ENCODE measurements at regions of chr7 and their contacts with region 1.

Region 1: DNA sequence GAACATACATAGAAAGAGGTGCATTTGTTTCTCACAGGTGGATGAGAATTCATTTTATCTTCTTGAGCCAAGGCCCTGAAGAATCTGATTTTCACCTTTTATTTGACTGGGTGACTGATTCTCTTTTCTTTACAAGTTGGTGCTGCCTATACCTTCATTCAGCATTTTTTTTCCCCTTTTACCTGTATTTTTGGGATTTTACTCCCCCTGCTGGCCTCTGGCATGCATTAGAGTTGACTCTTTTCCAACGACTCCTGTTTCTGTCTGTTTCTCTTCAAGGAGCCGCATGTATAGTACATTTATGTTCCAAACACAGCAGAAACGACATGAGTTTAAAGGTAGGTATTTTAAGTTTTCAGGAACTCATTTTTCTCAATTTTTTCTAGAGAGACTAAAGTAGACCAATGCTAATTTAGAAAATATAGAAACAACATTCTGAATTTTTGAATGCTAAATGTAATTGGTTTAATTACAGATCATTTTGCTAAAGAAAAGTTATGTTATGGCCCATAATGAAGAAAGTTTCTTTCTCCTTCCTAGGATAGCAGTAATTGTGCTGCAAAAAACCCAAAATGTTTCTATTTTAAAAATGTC is 149.8 kb upstream of the HDAC9 start:
- DNase-seq: no peak
- ATAC-seq: peak in 1 of 4 donors; percentile 49
- H3K4me3 ChIP-seq: no peak overlapping the region
- H3K27ac ChIP-seq: no peak overlapping the region
- H3K4me1 ChIP-seq: peaks cover 0 to 2% (median 0%) of the 10 kb centered on the region in 12 donors
- H3K27me3 ChIP-seq: no peaks in the 10 kb centered on the region
- CTCF ChIP-seq: peak; percentile 66 to 85 (median 76)
- POLR2A ChIP-seq: no peak

Region 2: GRCh38 chr7:17706734-17707133 is 639.0 kb before region 1 on chr7:
- intact Hi-C with region 1: loop called in 5 of 10 experiments (anchors 2 to 10 kb)
- DNase-seq: peak in 2 of 5 donors; percentile 23 to 31
- ATAC-seq: peak; percentile 51 to 80 (median 70)
- H3K4me3 ChIP-seq: no peak overlapping the region
- H3K27ac ChIP-seq: no peak overlapping the region
- H3K4me1 ChIP-seq: no peaks in the 10 kb centered on the region
- H3K27me3 ChIP-seq: no peaks in the 10 kb centered on the region
- CTCF ChIP-seq: peak; percentile 30 to 71 (median 54)
- POLR2A ChIP-seq: no peak

Region 3: DNA sequence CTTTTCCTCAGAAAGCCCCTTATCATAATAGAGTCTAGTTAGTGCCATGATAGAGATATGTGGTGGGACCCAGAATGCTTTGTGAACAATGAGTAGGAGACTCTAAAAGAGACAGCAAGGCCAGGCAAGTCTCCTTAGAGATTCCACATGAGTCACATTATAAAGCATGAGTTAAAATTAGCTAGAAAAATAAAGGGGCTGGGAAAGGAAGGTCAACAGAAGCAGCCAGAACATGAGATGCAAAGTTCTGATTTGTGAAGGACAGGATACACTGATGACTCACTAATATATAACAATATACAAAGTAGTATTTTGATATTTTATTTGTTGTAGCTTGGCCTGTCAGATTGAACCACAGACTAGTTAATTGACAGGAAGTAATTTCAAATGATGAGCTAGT is 380.1 kb before region 1 on chr7:
- intact Hi-C with region 1: loop called in 7 of 10 experiments (anchors 5 to 10 kb)
- DNase-seq: no peak
- ATAC-seq: no peak
- H3K4me3 ChIP-seq: no peak overlapping the region
- H3K27ac ChIP-seq: no peak overlapping the region
- H3K4me1 ChIP-seq: no peaks in the 10 kb centered on the region
- H3K27me3 ChIP-seq: no peaks in the 10 kb centered on the region
- CTCF ChIP-seq: no peak
- POLR2A ChIP-seq: no peak

Region 4: DNA sequence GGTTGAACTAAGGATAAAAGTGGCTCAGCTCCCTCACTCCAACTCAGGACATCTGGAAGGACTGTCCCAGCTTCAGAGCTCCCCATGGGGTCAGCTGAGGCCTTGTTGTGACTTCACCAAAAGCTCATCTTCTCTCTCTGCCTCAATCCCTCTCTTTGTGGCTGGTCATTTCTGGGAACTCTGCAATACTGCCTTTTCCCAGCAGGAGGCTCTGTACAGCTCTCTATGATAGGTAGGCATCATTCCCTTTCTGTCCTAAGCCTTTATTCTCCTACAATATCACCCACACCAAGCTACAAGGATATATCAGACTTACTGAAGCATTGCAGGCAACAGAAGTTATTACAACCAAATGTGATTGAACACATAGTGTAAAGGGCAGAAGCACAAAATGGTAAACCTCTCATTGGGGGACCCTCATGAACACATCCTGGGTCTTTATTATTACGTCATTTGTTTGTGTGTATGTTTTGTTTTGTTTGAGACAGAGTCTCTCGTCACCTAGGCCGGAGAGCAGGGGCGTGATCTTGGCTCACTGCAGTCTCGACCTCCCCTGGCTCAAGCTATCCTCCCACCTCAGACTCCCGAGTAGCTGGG is 281.4 kb before region 1 on chr7:
- intact Hi-C with region 1: loop called in 4 of 10 experiments (anchors 10 kb)
- DNase-seq: peak in 2 of 5 donors; percentile 14 to 18
- ATAC-seq: peak in 2 of 4 donors; percentile 36 to 56
- H3K4me3 ChIP-seq: no peak overlapping the region
- H3K27ac ChIP-seq: no peak overlapping the region
- H3K4me1 ChIP-seq: no peaks in the 10 kb centered on the region
- H3K27me3 ChIP-seq: no peaks in the 10 kb centered on the region
- CTCF ChIP-seq: peak; percentile 30 to 67 (median 58)
- POLR2A ChIP-seq: no peak

Region 5: DNA sequence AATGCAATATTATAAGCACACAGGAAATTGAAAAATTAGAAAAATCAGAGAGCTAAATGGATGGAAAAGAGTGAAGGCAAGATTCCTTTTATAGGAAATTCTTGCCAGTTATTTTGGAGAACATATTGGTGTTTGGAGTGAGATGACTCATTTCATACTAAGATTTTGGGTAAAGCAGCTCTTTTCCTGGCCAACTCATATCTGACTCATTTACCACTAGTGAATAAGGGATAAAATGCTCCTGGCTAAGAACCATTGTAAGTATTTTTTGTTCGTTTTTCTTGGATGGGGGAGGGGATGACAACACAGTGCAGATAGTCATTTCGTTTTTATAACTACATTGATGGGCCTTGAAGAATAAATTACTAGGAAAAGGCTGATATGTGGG is 632.4 kb after region 1 on chr7:
- intact Hi-C with region 1: no loop called
- DNase-seq: no peak
- ATAC-seq: peak in 3 of 4 donors; percentile 42 to 67 (median 46)
- H3K4me3 ChIP-seq: no peak overlapping the region
- H3K27ac ChIP-seq: no peak overlapping the region
- H3K4me1 ChIP-seq: peaks cover 0 to 13% (median 3%) of the 10 kb centered on the region in 12 donors
- H3K27me3 ChIP-seq: no peaks in the 10 kb centered on the region
- CTCF ChIP-seq: no peak
- POLR2A ChIP-seq: no peak

Region 6: GRCh38 chr7:19248681-19249080 is 902.9 kb after region 1 on chr7:
- intact Hi-C with region 1: loop called in 1 of 10 experiments (anchors 10 kb)
- DNase-seq: no peak
- ATAC-seq: no peak
- H3K4me3 ChIP-seq: no peak overlapping the region
- H3K27ac ChIP-seq: no peak overlapping the region
- H3K4me1 ChIP-seq: no peaks in the 10 kb centered on the region
- H3K27me3 ChIP-seq: no peaks in the 10 kb centered on the region
- CTCF ChIP-seq: no peak
- POLR2A ChIP-seq: no peak